H1 (cell line): ENCODE measurements at regions of chr1 and their contacts with region 1.

Region 1: GRCh38 chr1:48870596-48870995 is 93.9 kb upstream of the BEND5 start:
- DNase-seq: no peak
- H3K4me3 ChIP-seq: no peak overlapping the region
- H3K27ac ChIP-seq: no peak overlapping the region
- H3K4me1 ChIP-seq: peaks cover 0 to 15% (median under 1%) of the 10 kb centered on the region in 4 experiments; a peak in 4 of 7 replicates
- H3K27me3 ChIP-seq: 0 out of 7 replicates have a peak, but pooled peaks cover 0 to 2% (median 0%) of the 10 kb centered on the region in 4 experiments
- CTCF ChIP-seq: peak in 2 of 3 experiments; percentile 69 to 79; a peak in 3 of 4 replicates
- EP300 ChIP-seq: no peak
- POLR2A ChIP-seq: no peak
- RAD21 ChIP-seq: peak; percentile 50 to 63

Region 2: GRCh38 chr1:48882020-48882419 is 11.4 kb after region 1 on chr1:
- CTCF ChIA-PET with region 1: interaction called, 10 read pairs
- POLR2A ChIA-PET with region 1: no interaction called
- DNase-seq: no peak
- H3K4me3 ChIP-seq: no peak overlapping the region
- H3K27ac ChIP-seq: no peak overlapping the region
- H3K4me1 ChIP-seq: peaks cover 0 to 2% (median 0%) of the 10 kb centered on the region in 4 experiments; a peak in 1 of 7 replicates
- H3K27me3 ChIP-seq: no peaks in the 10 kb centered on the region
- CTCF ChIP-seq: no peak
- EP300 ChIP-seq: no peak
- POLR2A ChIP-seq: no peak
- RAD21 ChIP-seq: no peak